Aorta (tissue), 5 donors: ENCODE measurements at regions of chr20 and their contacts with region 1.

Region 1: DNA sequence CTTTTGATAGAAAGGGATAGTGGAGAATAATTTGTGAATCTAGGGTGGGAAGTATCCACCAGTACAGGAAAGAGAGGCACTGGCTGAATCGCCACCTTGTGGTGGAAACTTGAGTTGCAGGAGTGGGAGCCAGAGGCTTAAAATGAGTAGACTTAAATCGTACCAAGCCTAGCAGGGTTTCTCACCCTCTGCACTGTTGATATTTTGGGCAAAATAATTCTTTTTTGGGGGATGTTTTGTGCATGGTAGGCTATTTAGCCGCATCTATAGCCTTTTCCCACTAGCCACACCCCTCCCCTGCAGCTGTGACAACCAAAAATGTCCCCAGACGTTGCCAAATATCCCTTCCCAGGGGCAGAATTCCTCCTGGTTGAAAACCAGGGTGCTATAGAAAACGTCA is 119.1 kb downstream of the DHX35 start:
- DNase-seq: peak; percentile 83 to 89
- ATAC-seq: peak; percentile 75
- H3K4me3 ChIP-seq: no peak overlapping the region
- H3K27ac ChIP-seq: no peak overlapping the region
- H3K4me1 ChIP-seq: no peaks in the 10 kb centered on the region
- H3K27me3 ChIP-seq: no peaks in the 10 kb centered on the region

Region 2: GRCh38 chr20:39049684-39050554 is 31.3 kb before region 1 on chr20:
- intact Hi-C with region 1: loop called (anchors 1 to 2 kb)
- DNase-seq: peak; percentile 86 to 94
- ATAC-seq: peak; percentile 93
- H3K4me3 ChIP-seq: peak overlapping the region; percentile 63 to 66
- H3K27ac ChIP-seq: peak overlapping the region in 1 of 2 donors; percentile 41
- H3K4me1 ChIP-seq: no peaks in the 10 kb centered on the region
- H3K27me3 ChIP-seq: peaks cover 0 to 3% of the 10 kb centered on the region in 2 donors